Endothelial cell of umbilical vein (primary cell): ENCODE measurements at regions of chr5 and their contacts with region 1.

Region 1: DNA sequence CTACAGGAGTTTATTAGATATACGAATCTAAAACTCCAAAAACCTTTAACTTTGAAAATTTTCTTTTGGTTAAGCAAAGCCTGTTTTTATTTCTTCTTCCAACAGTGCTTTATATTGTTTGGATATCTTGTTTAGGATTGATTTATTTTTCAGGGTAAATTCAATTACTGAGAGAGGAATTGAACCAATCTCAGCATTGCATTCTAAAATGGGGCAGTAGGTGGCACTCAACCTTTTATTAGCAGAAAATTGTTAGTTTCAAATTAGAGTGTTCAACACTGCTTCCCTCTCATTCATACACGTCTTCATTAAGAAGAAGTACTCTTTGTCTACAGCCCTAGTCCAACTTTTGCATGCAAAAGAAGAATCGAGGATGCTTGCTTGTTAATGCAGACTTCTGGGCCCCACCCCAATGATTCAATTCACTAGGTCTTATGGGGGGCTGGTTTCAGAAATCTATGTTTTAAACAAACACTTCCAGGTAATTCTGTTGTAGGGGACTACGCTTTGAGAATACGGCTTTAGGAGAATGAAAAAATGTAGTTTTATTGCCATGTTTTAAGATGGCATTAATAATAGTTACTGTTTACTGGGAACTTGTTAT is 26.6 kb downstream of the MRPL22 start:
- DNase-seq: peak; percentile 73
- H3K4me3 ChIP-seq: peak overlapping the region in 2 of 3 experiments; percentile 21 to 77
- H3K27ac ChIP-seq: peak overlapping the region; percentile 87
- H3K4me1 ChIP-seq: peaks cover 58% of the 10 kb centered on the region
- H3K27me3 ChIP-seq: no peaks in the 10 kb centered on the region
- CTCF ChIP-seq: peak; percentile 43 to 44
- POLR2A ChIP-seq: no peak

Region 2: DNA sequence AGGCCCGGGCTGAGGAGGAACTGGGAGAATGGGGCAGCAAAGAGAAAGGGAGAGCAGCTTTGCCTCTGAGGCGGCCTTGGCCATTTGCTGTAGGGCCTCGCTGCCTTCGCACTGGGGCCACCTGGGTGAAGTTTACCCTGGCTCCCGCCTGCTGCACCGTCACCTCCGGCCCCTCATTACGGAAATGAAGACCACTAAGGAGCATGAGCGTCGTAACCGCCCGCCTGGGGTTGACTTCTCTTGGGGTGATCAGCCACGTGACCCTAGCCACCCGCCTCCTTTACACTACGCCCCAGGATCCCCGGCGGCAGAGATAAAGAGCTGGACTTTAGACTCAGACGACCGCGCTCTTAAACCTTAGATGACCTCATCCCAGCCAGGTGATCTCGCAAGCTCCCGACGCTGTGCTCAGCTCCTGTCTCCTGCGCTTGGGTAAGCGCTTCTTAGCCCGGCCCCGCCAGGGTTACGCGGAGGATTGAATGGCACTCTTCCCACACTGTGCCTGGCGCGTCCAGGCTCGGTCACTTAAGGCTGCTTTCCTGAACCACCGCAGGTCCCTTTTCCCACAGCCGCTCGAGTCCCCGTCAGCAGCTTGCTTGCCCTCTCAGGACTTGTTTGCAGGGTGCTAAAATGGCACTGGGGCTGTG is 320.3 kb before region 1 on chr5:
- CTCF ChIA-PET with region 1: interaction called, 3 read pairs
- POLR2A ChIA-PET with region 1: no interaction called
- dilution Hi-C with region 1: no loop called
- intact Hi-C with region 1: loop called (anchors 1 kb)
- DNase-seq: peak; percentile 19
- H3K4me3 ChIP-seq: peak overlapping the region; percentile 1 to 28 (median 9)
- H3K27ac ChIP-seq: no peak overlapping the region
- H3K4me1 ChIP-seq: peaks cover 6% of the 10 kb centered on the region
- H3K27me3 ChIP-seq: no peaks in the 10 kb centered on the region
- CTCF ChIP-seq: no peak
- POLR2A ChIP-seq: no peak

Region 3: DNA sequence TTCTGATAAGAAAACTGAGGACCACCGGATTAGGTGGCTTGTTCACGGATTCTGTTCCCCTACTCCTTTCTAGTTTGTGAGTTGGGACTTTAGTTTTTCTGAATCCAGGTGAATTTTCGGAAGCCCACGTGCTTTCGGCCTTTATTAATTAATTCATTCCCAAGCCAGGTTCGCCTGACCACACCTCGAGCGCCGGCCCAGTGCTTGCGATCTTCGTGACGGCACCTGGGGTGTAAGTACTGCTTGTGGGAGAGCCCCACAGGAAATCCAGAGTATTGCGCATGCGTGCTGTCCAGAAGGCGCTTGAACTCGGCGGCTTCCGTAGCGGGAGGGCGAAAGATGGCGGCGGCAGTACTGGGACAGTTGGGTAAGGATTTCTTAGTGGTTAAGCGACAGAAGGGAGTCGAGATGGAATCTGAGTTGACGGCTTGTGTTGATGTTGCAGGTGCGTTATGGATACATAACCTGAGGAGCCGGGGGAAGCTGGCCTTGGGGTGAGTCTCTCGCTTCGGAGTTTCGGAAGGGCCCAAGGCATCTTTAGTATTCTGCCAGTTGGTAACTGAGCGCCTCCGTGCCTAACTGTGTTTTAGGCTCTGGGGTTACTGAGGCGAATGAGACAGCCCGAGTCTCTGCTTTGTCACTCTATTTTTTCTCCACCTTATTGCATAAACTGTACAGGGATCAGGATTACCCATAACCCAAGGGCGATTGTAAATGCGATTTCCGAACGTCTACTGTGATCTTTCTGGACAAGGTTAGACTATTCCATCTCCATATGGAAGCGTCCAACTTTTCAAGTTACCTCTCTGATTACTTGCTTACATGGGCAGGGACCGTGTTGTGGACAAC is 26.5 kb before region 1 on chr5 and contains the start of gene MRPL22:
- CTCF ChIA-PET with region 1: interaction called, 35 read pairs
- POLR2A ChIA-PET with region 1: no interaction called
- dilution Hi-C with region 1: no loop called
- intact Hi-C with region 1: loop called (anchors 1 kb)
- DNase-seq: peak; percentile 95
- H3K4me3 ChIP-seq: peak within 1 kb of the TSS; percentile 84 to 99 (median 91)
- H3K27ac ChIP-seq: peak within 1 kb of the TSS; percentile 81
- H3K4me1 ChIP-seq: peaks cover 56% of the 10 kb centered on the region
- H3K27me3 ChIP-seq: no peaks in the 10 kb centered on the region
- CTCF ChIP-seq: no peak
- POLR2A ChIP-seq: peak; percentile 86
- total RNA-seq, gene MRPL22: 90.8 and 112 TPM in 2 replicates

Region 4: GRCh38 chr5:154995679-154996078 is 28.2 kb after region 1 on chr5:
- CTCF ChIA-PET with region 1: interaction called, 48 read pairs
- POLR2A ChIA-PET with region 1: no interaction called
- dilution Hi-C with region 1: no loop called
- intact Hi-C with region 1: loop called (anchors 1 kb)
- DNase-seq: peak; percentile 39
- H3K4me3 ChIP-seq: no peak overlapping the region
- H3K27ac ChIP-seq: no peak overlapping the region
- H3K4me1 ChIP-seq: peaks cover 15% of the 10 kb centered on the region
- H3K27me3 ChIP-seq: no peaks in the 10 kb centered on the region
- CTCF ChIP-seq: peak; percentile 16 to 36
- POLR2A ChIP-seq: no peak

Region 5: DNA sequence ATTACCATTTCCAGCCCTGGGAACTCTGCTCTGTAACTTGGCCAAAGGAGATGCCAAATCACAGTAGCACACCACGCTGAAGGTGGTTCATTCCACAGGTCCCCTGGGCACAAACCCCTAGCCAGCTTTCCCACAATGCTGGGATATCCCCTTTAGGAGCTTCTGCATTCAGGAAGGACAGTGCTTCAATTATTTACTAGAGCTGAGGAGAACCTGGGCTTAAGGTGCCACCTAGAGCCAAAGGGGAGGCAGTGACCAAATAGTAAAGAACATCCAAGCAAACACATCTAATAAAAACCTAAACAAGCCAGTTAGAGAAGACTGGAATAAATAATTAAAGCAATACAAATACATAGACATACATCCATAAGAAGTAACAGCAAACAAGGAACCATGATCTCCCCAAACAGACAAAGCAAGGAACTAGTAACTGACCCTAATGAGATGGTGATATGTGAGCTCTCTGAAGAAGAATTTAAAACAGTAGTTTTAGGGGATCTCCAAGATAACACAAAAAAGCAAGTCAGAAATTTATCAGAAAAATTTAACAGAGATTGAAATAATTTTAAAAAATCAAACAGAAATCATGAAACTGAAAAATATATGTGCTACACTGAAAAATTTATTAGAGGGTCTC is 60.6 kb after region 1 on chr5:
- CTCF ChIA-PET with region 1: interaction called, 191 read pairs
- POLR2A ChIA-PET with region 1: no interaction called
- dilution Hi-C with region 1: no loop called
- intact Hi-C with region 1: loop called (anchors 1 kb)
- DNase-seq: peak; percentile 20
- H3K4me3 ChIP-seq: no peak overlapping the region
- H3K27ac ChIP-seq: no peak overlapping the region
- H3K4me1 ChIP-seq: no peaks in the 10 kb centered on the region
- H3K27me3 ChIP-seq: no peaks in the 10 kb centered on the region
- CTCF ChIP-seq: peak; percentile 22 to 28
- POLR2A ChIP-seq: no peak